Activated CD4-positive, alpha-beta T cell treated with anti-CD3 and anti-CD28 coated beads, Interleukin-2, amount 10 ng/mL, durations not matched to agents 24 days and 14 days (primary cell): ENCODE measurements at regions of chr21 and their contacts with region 1.

Region 1: GRCh38 chr21:35088319-35088771 is 39.2 kb upstream of the RUNX1 start:
- DNase-seq: no peak
- H3K4me3 Mint-ChIP-seq: no peak overlapping the region
- H3K27ac Mint-ChIP-seq: peak overlapping the region; percentile 96
- H3K4me1 Mint-ChIP-seq: peaks cover 30% of the 10 kb centered on the region
- H3K27me3 Mint-ChIP-seq: no peaks in the 10 kb centered on the region

Region 2: DNA sequence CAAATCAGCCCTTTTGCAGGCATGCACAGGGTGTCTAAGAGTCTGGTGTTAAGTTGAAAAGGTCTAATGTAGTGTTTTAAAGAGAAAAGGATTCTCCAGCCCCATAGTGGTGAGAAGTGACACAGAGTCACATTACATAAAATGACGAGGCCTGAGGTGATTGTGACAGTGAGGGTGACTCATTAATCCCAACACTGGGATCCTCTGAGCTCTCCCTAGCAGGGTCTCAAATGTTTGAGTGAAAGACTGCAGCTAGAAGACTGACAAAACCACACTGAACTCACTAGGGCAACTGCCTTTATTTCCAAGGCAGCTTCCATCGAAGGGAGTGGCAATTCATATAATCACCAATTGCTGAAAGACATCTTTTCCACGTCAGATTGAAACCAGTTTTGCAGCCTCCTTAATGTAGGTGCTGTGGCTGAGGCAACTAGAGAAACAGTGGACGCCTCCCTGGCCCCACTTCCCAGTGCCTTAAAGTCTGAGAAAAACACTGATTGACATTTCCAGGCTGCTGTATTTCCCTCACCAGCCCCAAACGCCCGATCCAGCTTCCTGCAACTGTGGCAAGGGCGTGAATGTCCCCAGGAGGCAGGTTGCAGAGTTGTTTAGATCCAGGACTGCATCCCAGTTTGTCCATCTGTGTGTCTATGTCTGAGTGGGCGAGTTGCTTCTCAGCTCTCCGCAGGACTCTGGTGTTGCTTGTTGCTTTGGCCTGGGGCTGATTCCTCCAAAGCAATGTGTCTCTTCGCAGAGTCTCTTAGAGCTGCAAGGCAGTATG is 120.6 kb before region 1 on chr21:
- intact Hi-C with region 1: loop called (anchors 1 kb)
- DNase-seq: peak; percentile 77
- H3K4me3 Mint-ChIP-seq: peak overlapping the region; percentile 79
- H3K27ac Mint-ChIP-seq: peak overlapping the region; percentile 96
- H3K4me1 Mint-ChIP-seq: peaks cover 81% of the 10 kb centered on the region
- H3K27me3 Mint-ChIP-seq: peaks cover 9% of the 10 kb centered on the region

Region 3: DNA sequence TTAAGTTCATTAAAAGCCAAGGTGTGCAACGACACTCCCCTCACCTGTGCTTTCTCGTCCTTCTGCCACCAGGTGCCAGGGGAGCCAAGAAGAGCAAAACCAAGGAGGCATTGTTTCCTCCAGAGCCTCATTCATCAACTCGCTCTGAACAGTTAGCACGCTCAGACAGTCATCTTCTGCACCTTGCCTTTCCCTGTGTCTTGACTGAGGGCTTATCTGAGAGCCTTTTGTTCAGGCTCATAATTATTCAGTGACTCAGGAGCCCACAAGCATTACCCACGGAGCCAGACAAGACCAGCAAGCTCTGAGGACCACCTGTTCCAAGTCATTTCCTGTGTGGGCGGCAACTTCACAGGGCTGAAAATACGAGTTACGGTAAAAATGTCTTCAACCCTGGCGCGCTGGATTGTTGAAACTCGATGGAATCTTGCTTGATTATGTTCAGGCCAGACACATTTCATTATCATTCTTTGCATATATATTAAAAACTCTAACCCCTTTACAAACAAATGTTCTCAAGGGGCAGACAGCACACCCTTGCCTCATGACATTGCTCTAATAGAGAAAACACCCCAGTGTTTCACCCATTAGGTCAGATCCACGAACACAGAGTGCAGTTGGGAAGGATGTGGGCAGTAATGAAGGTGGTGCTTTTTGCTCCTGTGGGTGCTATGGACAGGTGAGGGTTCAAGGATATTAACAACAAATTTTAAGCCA is 50.5 kb after region 1 on chr21:
- intact Hi-C with region 1: loop called (anchors 2 kb)
- DNase-seq: peak; percentile 68
- H3K4me3 Mint-ChIP-seq: peak overlapping the region; percentile 74
- H3K27ac Mint-ChIP-seq: peak overlapping the region; percentile 97
- H3K4me1 Mint-ChIP-seq: peaks cover 30% of the 10 kb centered on the region
- H3K27me3 Mint-ChIP-seq: no peaks in the 10 kb centered on the region

Region 4: DNA sequence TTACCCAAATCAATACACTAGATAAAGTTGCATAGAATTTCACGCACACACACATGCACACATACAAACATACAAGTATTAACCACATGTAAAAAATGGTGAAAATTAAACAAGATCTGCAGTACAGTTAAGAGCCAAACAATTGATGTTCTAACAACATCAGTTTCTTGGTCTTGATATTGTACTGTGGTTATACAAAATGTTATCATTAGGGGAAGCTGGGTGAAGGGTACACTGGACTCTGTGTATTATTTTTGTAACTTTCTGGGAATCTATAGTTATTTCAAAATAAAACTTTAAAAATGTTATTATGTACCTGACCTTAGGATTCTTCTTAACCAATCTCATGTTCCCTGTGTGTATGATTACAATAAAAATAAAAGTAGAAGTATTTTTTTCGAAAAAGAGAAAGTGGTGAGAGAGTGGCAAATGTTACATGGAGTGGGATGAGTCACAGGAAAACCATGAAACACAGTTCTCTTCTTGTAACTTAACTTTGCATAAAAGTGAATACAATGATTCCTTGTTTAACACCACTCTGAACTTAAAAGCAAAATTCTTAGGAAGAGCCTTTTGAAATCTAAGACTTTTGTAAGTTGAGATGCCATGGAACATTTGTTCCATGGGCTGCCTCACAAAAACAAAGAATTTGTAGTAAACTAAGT is 62.3 kb after region 1 on chr21:
- intact Hi-C with region 1: loop called (anchors 2 kb)
- DNase-seq: no peak
- H3K4me3 Mint-ChIP-seq: peak overlapping the region; percentile 48
- H3K27ac Mint-ChIP-seq: peak overlapping the region; percentile 92
- H3K4me1 Mint-ChIP-seq: peaks cover 33% of the 10 kb centered on the region
- H3K27me3 Mint-ChIP-seq: no peaks in the 10 kb centered on the region

Region 5: DNA sequence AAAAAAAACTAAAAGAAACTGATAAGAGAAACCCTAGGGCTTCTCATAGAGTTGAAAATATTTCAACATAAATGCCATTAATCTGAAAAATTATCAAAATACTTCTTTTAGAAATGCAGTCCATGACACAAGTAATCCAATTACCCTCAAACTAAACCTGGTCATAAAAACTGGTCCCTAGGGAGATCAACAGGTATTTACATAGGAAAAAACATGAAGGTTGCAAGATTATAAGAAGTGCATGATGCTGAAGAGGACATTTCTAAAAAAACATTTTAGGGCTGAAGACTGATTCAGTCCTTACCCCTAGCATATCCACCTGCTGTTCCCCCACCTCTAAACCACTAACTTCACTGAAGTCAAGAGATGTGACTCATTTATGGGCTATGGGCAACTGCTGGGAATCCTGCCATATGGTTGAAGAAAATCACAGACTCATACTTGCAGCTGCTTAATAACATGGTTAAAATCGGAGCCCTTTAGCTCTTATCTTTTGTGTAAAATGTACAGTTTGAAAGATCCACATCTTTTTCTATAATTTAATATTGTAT is 91.7 kb after region 1 on chr21:
- intact Hi-C with region 1: no loop called
- DNase-seq: no peak
- H3K4me3 Mint-ChIP-seq: no peak overlapping the region
- H3K27ac Mint-ChIP-seq: no peak overlapping the region
- H3K4me1 Mint-ChIP-seq: peaks cover 6% of the 10 kb centered on the region
- H3K27me3 Mint-ChIP-seq: peaks cover 4% of the 10 kb centered on the region

Region 6: DNA sequence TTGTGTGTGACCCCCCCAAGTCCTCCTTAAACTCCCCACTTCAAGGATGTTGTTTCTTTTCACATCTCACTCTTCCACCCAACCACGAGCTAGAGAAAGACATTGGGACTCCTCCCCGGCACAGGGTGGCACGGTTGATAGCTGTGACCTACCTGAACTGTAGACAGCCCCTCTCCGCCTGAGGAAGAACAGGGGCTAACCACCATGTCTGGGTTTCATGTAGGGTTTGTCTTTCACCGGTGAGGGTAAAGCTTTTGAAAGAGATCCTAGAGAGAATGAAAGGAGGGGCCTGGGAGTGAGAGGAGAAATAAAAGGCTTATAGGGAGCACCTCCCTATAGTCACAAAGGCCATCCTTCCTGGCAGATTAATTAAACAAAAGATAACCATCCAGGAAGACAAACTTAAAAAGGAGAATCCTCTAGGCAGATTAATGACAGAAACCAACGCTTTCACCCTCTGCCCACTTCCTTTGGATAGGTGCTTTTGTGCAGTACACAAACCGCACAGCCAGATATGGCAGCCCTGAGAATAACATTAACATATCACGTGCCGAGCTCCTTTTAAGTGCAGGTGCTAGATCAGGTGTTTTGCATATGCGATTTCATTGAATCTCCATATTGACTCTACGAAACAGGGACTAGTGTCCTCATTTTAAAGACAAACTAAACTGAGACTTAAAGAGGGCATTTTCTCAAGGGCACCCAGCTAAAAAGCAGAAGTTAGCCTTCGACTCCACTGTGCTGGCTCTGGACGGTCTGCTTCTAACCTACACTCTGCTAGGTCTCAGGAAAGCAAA is 138.8 kb after region 1 on chr21:
- intact Hi-C with region 1: loop called (anchors 2 kb)
- DNase-seq: peak; percentile 85
- H3K4me3 Mint-ChIP-seq: peak overlapping the region; percentile 46
- H3K27ac Mint-ChIP-seq: peak overlapping the region; percentile 70
- H3K4me1 Mint-ChIP-seq: peaks cover 30% of the 10 kb centered on the region
- H3K27me3 Mint-ChIP-seq: no peaks in the 10 kb centered on the region

Region 7: DNA sequence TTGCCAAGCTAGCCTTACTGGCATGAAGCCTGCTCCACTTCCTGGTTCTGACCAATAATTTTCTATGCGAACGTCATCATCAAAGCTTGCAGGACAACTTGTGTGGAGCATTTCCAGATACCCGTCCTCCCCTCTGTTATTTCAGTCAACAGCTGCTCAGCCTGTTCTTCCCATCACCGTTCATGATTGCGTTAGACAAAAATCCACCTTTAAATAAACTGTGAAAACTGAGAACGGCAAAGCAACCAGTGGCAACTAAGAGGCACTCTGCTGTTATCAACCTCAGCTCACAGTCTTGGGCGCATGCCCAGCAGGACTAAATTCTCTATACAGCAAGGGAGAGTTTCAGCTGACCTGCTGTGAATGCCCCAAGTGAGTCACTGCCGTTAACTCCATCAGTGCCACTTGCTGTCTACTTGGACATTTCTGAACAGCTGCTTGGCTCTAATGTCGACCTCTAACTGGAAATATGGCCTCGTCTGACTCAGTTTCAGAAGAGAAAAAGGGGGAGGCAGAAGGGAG is 168.2 kb after region 1 on chr21:
- intact Hi-C with region 1: loop called (anchors 2 kb)
- DNase-seq: no peak
- H3K4me3 Mint-ChIP-seq: no peak overlapping the region
- H3K27ac Mint-ChIP-seq: peak overlapping the region; percentile 12
- H3K4me1 Mint-ChIP-seq: no peaks in the 10 kb centered on the region
- H3K27me3 Mint-ChIP-seq: no peaks in the 10 kb centered on the region

Region 8: DNA sequence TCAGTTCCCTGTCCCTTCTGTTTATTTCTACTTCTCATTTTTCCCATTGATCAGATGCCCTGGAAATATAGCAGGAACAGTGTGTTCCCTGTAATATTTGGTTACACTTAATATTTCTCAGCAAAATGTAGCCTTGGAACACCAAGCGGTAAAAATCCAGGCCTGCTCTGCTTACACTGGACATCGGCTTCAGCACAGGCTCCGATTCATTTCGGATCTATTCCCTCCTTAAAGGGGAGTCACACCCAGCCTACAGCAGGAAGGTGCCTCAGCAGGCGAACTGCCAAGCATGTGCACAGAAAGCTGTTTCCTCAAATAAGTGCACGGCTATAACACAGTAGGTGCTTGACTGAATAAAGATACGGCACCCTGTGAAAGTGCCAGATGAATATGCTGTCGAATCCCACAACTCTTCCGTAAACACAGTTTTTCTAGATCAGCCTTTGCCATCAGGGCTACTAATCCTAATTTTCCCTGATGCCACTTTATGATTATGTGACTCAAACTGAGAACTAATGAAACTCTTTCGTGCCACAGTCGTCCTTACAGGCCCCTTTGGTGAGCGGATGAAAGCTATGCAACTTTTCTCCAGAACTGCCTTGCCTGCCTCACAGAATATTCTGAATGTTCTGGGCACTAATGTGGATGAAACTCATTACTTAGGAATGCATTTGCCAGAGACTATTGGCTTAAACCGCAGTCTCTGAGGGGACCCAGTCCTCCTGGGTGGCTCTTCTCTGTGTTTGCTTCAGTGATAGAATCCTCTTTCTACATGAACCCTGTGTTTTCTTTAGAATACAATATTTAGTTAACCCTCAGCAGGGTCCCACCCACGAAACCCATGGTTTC is 236.3 kb after region 1 on chr21:
- intact Hi-C with region 1: no loop called
- DNase-seq: no peak
- H3K4me3 Mint-ChIP-seq: no peak overlapping the region
- H3K27ac Mint-ChIP-seq: peak overlapping the region; percentile 6
- H3K4me1 Mint-ChIP-seq: peaks cover 5% of the 10 kb centered on the region
- H3K27me3 Mint-ChIP-seq: peaks cover 2% of the 10 kb centered on the region